Panc1 (cell line): ENCODE measurements at regions of chr3 and their contacts with region 1.

Region 1: GRCh38 chr3:53375019-53375418 is 27.7 kb upstream of the DCP1A start:
- DNase-seq: peak; percentile 42
- ATAC-seq: peak; percentile 99
- H3K4me3 ChIP-seq: no peak overlapping the region
- H3K27ac ChIP-seq: no peak overlapping the region
- H3K4me1 ChIP-seq: no peaks in the 10 kb centered on the region
- H3K27me3 ChIP-seq: no peaks in the 10 kb centered on the region
- CTCF ChIP-seq: peak; percentile 87

Region 2: GRCh38 chr3:52041118-52041731 is 1333.8 kb before region 1 on chr3:
- CTCF ChIA-PET with region 1: no interaction called
- POLR2A ChIA-PET with region 1: no interaction called
- in situ Hi-C with region 1: no loop called
- intact Hi-C with region 1: no loop called
- DNase-seq: no peak
- ATAC-seq: peak; percentile 54; the same call in 1 of the 2 replicates
- H3K4me3 ChIP-seq: no peak overlapping the region
- H3K27ac ChIP-seq: no peak overlapping the region
- H3K4me1 ChIP-seq: peaks cover 4% of the 10 kb centered on the region
- H3K27me3 ChIP-seq: no peaks in the 10 kb centered on the region
- CTCF ChIP-seq: no peak

Region 3: DNA sequence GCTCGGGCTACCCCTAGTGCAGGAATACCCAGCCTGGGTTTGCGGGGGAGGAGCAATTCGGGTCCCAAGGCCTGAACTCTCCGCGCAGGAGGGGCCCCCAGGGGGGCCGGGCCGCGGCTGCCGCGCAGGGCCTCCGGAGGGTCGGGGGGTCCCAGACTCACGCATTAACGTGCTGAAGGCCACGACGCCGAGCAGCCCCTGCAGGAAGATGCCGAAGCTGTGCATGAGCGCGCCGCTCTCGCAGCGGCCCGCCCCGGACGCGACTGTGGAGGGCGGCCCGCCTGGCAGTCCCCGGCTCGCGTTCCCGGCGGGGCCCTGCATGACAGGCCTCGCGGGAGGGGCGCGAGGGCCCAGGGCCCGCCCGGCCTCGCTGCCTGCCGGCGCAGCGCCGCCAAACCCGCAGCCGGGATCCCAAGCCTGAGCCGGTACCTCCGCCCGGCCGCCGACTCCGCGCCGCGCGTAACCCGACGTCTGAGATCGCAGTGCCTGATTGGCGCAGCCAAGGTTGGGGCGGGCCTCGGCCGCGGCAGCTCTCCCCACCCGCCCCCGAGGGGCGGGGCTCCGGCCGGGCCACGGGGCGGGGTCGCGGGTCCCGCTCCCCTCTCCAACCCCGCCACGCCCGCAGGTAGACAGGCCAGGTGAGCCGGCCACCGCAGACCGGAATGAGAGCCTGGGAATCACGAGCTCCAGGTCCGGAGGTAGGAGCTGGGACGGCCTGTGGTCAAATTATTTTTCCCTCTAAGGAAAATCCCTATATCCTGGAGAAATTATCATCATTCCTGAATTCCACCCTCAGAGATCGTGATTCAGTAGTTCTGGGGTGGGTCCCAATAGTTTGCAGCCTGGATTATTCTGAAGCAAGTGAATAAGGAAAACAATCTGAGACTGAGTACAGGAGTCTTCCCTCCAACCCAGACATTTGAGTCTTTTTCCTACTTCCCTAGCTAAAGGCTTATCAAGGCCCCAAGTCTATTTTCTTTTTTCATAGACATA is 477.6 kb before region 1 on chr3 and contains the start of gene STIMATE:
- CTCF ChIA-PET with region 1: no interaction called
- POLR2A ChIA-PET with region 1: no interaction called
- in situ Hi-C with region 1: no loop called
- intact Hi-C with region 1: no loop called
- DNase-seq: no peak
- ATAC-seq: peak; percentile 99
- H3K4me3 ChIP-seq: peak within 1 kb of the TSS; percentile 78 to 80
- H3K27ac ChIP-seq: peak within 1 kb of the TSS; percentile 65
- H3K4me1 ChIP-seq: peaks cover 28% of the 10 kb centered on the region
- H3K27me3 ChIP-seq: no peaks in the 10 kb centered on the region
- CTCF ChIP-seq: no peak
- total RNA-seq, gene STIMATE: 15.7 TPM

Region 4: DNA sequence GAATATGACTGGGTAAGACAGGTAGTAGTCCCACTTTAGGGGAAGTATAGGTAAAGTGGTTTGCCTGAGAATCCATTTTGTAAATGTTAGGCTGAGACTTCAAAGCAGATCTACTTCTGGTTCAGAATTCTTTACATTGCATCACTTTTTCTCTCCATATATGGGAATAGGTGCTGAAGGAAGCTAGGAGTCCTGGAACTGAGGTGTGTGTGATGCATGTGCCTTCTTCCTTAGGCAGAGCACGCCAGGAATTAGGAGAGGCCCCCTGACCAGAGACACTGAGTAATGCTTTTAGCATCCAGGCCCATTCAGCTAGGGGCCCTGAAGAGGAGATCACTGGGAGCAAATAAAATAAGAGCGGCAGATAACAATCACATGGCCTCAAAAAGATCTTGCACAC is 41.5 kb after region 1 on chr3:
- CTCF ChIA-PET with region 1: no interaction called
- POLR2A ChIA-PET with region 1: no interaction called
- in situ Hi-C with region 1: no loop called
- intact Hi-C with region 1: no loop called
- DNase-seq: no peak
- ATAC-seq: no peak
- H3K4me3 ChIP-seq: no peak overlapping the region
- H3K27ac ChIP-seq: no peak overlapping the region
- H3K4me1 ChIP-seq: no peaks in the 10 kb centered on the region
- H3K27me3 ChIP-seq: no peaks in the 10 kb centered on the region
- CTCF ChIP-seq: no peak

Region 5: GRCh38 chr3:53486961-53487654 is 112.1 kb after region 1 on chr3:
- CTCF ChIA-PET with region 1: no interaction called
- POLR2A ChIA-PET with region 1: no interaction called
- in situ Hi-C with region 1: no loop called
- intact Hi-C with region 1: loop called (anchors 5 kb)
- DNase-seq: no peak
- ATAC-seq: no peak
- H3K4me3 ChIP-seq: no peak overlapping the region
- H3K27ac ChIP-seq: peak overlapping the region; percentile 7; the same call in 1 of the 2 replicates
- H3K4me1 ChIP-seq: peaks cover 10% of the 10 kb centered on the region; the same call in 1 of the 2 replicates
- H3K27me3 ChIP-seq: no peaks in the 10 kb centered on the region
- CTCF ChIP-seq: peak; percentile 25

Region 6: DNA sequence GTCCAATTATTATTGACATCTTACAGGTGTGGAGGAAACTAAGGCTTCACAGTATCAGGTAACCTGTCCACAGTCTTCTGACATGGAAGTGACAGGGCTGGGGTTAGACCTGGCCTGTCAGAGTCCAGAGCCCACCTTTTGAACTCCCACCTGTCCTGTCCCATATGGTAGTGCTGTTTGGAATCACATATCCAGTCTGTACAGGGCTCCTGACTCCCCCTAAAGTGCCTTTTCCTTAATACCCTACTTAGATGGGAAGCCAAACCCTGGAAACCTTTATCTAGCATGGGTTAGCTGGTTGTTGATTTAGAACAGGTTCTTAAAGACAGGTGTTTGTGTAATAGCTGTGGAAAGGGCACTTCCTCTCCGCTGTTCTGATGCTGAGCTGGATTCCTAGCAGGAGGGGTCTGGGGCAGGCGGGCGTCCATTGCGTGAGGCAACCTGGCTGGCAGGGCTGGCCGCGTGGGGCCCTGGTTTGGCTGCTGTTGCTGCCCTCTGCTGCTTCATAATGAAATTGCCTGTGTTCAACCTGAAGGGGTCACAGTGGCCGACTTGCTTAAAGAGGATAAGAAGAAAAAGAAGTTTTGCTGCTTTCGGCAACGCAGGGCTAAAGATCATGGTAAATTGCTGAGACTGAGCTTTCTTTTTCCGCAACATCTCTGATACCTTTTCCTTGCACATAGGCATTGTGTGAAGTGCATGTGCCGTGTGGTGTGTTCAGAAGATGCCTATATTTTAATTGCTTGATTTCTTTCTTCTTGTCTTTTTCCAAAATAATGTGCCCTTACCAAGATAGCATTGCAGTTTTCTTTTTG is 335.0 kb after region 1 on chr3:
- CTCF ChIA-PET with region 1: no interaction called
- POLR2A ChIA-PET with region 1: no interaction called
- in situ Hi-C with region 1: no loop called
- intact Hi-C with region 1: loop called (anchors 1 kb)
- DNase-seq: peak; percentile 25
- ATAC-seq: peak; percentile 87
- H3K4me3 ChIP-seq: no peak overlapping the region
- H3K27ac ChIP-seq: no peak overlapping the region; the same call in 1 of the 2 replicates
- H3K4me1 ChIP-seq: no peaks in the 10 kb centered on the region
- H3K27me3 ChIP-seq: no peaks in the 10 kb centered on the region
- CTCF ChIP-seq: peak; percentile 82